K562 (cell line): ENCODE measurements at regions of chr12 and their contacts with region 1.

Region 1: GRCh38 chr12:90959538-90960139 is 4.7 kb upstream of the CCER1 start:
- DNase-seq: peak; percentile 13 to 50 (median 28)
- ATAC-seq: peak; percentile 82
- H3K4me3 ChIP-seq: no peak overlapping the region
- H3K27ac ChIP-seq: no peak overlapping the region
- H3K4me1 ChIP-seq: peaks cover 0 to 3% of the 10 kb centered on the region in 2 experiments; a peak in 1 of 5 replicates
- H3K27me3 ChIP-seq: no peaks in the 10 kb centered on the region
- CTCF ChIP-seq: peak; percentile 62 to 67 (median 66)
- EP300 ChIP-seq: no peak
- POLR2A ChIP-seq: no peak
- RAD21 ChIP-seq: peak; percentile 43 to 66; a peak in 3 of 4 replicates

Region 2: GRCh38 chr12:91040096-91040755 is 80.6 kb after region 1 on chr12:
- CTCF ChIA-PET with region 1: no interaction called
- POLR2A ChIA-PET with region 1: no interaction called
- in situ Hi-C with region 1: no loop called
- intact Hi-C with region 1: no loop called
- DNase-seq: no peak
- ATAC-seq: no peak
- H3K4me3 ChIP-seq: no peak overlapping the region
- H3K27ac ChIP-seq: no peak overlapping the region
- H3K4me1 ChIP-seq: no peaks in the 10 kb centered on the region
- H3K27me3 ChIP-seq: no peaks in the 10 kb centered on the region
- CTCF ChIP-seq: no peak
- EP300 ChIP-seq: no peak
- POLR2A ChIP-seq: no peak
- RAD21 ChIP-seq: no peak

Region 3: GRCh38 chr12:92649511-92650227 is 1690.0 kb after region 1 on chr12:
- CTCF ChIA-PET with region 1: no interaction called
- POLR2A ChIA-PET with region 1: no interaction called
- in situ Hi-C with region 1: loop called (anchors 25 kb)
- intact Hi-C with region 1: no loop called
- DNase-seq: peak; percentile 42 to 77 (median 50)
- ATAC-seq: peak; percentile 97
- H3K4me3 ChIP-seq: no peak overlapping the region
- H3K27ac ChIP-seq: no peak overlapping the region
- H3K4me1 ChIP-seq: no peaks in the 10 kb centered on the region
- H3K27me3 ChIP-seq: peaks cover 8 to 13% of the 10 kb centered on the region in 2 experiments; a peak in 4 of 5 replicates
- CTCF ChIP-seq: peak; percentile 65 to 78 (median 66)
- EP300 ChIP-seq: no peak
- POLR2A ChIP-seq: no peak
- RAD21 ChIP-seq: peak; percentile 81 to 89